ENCODE measurements at regions of chr14 and their contacts with region 1.

Region 1: DNA sequence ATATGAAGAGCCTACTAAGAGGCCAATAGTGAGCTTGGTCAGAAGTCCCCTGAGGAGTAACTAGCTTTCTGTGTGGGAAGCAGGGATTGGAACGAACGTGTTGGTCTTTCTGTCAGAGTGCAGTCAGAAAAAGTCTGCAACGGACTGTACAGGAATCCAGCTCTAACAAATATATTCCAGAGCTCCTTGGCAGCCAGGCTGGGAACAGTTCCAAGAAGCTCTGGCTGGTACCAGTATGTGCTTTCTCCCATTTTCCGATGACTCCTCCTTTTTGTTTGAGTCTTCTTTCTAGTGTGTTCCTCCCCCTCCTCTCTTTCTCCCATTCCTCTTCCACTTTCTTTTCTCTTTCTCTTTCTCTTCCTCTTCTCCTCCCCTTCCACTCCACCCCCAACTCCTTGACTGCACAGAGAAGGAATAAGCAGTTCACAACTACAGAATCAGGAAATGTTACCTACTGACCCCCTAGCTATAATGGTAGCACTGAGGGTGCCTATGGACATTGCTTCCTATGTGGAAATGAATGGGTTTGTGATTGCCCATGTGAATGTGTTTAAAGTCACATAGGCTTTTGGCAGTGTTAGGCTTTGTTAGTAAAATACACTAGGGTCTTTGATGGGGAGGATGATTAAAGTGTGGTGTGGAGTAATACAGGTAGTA is 59.9 kb downstream of the TTLL5 start:
- DNase-seq: no peak
- H3K4me3 ChIP-seq: no peak overlapping the region
- CTCF ChIP-seq: no peak

Region 2: DNA sequence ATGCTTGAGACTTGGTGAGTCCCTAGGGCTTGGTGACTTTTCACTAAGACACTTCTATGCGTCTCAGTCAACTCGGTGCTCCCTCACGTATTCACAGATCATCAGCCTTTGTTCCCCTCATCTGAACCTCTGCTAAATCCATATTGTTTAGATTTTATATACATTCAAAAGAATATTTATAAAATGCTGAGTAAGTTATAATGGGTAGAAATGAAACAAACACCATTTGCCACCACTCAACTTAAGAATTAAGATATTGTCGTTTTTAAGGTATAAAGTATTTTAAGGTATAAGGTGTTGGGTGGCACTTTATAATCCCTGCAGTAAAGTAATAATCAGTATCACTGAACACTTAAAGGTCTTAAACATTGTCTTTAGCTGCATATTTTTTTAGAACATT is 43.1 kb after region 1 on chr14:
- in situ Hi-C with region 1: loop called (anchors 5 kb)
- DNase-seq: no peak
- H3K4me3 ChIP-seq: no peak overlapping the region
- CTCF ChIP-seq: no peak

Region 3: GRCh38 chr14:75811872-75812499 is 91.0 kb after region 1 on chr14:
- in situ Hi-C with region 1: loop called (anchors 5 kb)
- DNase-seq: no peak
- H3K4me3 ChIP-seq: no peak overlapping the region
- CTCF ChIP-seq: no peak